ENCODE measurements at regions of chr11 and their contacts with region 1.

Region 1: GRCh38 chr11:47766305-47767227 is 575 bp downstream of the FNBP4 start:
- DNase-seq: peak; percentile 89
- ATAC-seq: peak; percentile 37
- H3K4me3 Mint-ChIP-seq: peak overlapping the region; percentile 98
- H3K27ac Mint-ChIP-seq: peak overlapping the region; percentile 98
- H3K4me1 Mint-ChIP-seq: peaks cover 18% of the 10 kb centered on the region
- H3K27me3 Mint-ChIP-seq: no peaks in the 10 kb centered on the region

Region 2: DNA sequence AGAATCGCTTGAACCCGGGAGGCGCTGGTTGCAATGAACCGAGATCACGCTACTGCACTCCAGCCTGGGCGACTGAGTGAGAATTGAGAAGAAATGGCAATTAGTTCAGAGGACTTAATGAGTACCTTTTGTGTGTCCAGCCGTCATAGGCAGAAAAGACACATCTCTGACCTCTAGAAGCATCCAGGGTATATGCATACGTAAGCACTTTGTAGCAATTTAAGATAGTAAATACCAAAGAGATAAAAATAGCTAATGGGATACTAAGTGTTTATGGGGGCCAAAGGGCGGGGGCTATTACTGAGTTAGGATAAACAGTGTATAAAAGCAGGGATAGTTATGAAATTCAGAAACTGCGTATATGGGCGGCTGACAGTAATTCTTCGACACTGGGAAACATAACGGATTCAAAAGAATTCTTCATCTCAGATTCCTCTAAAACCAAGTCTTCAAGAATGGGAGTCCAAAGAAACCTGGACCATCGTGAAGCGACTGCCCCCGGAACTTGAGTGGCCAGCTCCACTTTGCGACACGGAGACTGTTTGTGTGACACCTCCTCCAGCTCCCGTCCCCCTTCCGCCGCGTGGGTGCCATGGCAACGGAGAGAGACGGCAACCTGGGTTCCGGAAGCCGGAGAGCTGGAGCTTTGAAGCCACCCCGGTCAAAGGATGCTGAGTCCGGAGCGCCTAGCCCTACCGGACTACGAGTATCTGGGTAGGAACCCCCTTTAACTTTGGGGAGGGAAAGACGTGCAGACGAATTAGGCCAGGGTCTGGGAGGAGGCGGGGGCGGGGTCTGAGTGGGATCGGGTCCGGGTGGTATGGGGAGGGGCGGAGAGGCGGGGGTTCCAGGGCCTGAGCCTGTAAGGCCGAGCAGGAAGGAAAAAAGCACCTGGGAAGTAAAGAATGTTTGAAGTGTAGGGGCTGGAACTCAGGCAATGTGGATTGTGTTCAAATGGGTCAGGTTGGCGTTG is 830.1 kb before region 1 on chr11 and contains the start of gene CSTPP1:
- CTCF ChIA-PET with region 1: no interaction called
- POLR2A ChIA-PET with region 1: no interaction called
- intact Hi-C with region 1: loop called in 1 of 2 experiments (anchors 5 kb)
- DNase-seq: peak; percentile 97
- ATAC-seq: peak; percentile 96
- H3K4me3 Mint-ChIP-seq: peak within 1 kb of the TSS; percentile 86
- H3K27ac Mint-ChIP-seq: peak within 1 kb of the TSS; percentile 88
- H3K4me1 Mint-ChIP-seq: peaks cover 16% of the 10 kb centered on the region
- H3K27me3 Mint-ChIP-seq: peaks cover 5% of the 10 kb centered on the region
- total RNA-seq, gene CSTPP1: 17.9 to 18.6 TPM

Region 3: DNA sequence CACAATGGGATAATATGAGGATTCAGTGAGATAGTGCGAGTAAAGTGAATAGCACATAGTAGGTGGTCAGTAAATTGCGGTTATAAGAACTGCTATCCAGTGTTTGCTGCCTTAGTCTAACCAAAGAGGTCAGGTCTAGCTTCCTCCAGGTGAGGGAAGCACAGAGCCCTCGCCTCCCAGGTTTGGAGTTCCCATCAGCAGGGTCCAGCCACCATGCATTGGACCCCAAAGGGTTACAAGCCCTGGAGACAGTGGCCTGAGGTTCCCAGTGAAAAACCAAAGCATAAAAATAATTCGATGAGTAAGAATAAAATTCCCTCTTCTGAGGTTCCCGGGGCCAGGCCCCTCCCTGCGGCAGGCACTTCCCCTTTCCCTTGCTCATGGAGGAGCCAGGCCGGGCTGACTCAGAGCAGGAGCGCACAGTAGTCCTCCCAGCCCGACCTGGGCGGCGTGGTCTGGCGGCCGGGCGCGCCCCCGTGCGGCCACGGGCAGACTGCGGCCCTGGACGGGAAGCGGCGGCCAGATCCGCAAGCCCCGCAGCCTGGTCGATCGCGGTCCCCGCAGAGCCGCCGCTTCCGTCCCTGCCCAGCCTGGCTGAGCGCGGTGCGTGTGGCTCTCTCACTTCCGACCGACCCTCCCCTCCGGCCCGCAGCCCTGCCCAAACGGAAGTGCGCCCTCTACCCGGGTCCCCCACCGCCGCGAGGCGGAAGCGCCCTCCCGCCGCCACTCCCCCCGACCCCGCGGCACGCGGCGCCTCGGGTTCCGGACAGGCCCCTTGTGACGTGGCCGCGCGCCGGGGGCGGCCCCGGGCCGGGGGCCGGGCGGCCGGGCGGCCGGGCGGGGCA is 358.6 kb before region 1 on chr11 and contains the start of gene SLC39A13:
- CTCF ChIA-PET with region 1: no interaction called
- POLR2A ChIA-PET with region 1: no interaction called
- intact Hi-C with region 1: loop called in 1 of 2 experiments (anchors 1 kb)
- DNase-seq: peak; percentile 95
- ATAC-seq: peak; percentile 91
- H3K4me3 Mint-ChIP-seq: peak within 1 kb of the TSS; percentile 89
- H3K27ac Mint-ChIP-seq: peak within 1 kb of the TSS; percentile 94
- H3K4me1 Mint-ChIP-seq: peaks cover 16% of the 10 kb centered on the region
- H3K27me3 Mint-ChIP-seq: no peaks in the 10 kb centered on the region
- total RNA-seq, gene SLC39A13: 8.6 to 10.7 TPM

Region 4: GRCh38 chr11:47578524-47579460 is 187.8 kb before region 1 on chr11 and contains the starts of genes KBTBD4 and NDUFS3:
- CTCF ChIA-PET with region 1: no interaction called
- POLR2A ChIA-PET with region 1: no interaction called
- intact Hi-C with region 1: loop called (anchors 1 kb)
- DNase-seq: peak; percentile 92
- ATAC-seq: peak; percentile 96
- H3K4me3 Mint-ChIP-seq: peak within 1 kb of the TSS; percentile 87
- H3K27ac Mint-ChIP-seq: peak within 1 kb of the TSS; percentile 93
- H3K4me1 Mint-ChIP-seq: peaks cover 39% of the 10 kb centered on the region
- H3K27me3 Mint-ChIP-seq: no peaks in the 10 kb centered on the region
- total RNA-seq, gene KBTBD4: 11.9 to 18.4 TPM
- total RNA-seq, gene NDUFS3: 96.9 to 108 TPM

Region 5: DNA sequence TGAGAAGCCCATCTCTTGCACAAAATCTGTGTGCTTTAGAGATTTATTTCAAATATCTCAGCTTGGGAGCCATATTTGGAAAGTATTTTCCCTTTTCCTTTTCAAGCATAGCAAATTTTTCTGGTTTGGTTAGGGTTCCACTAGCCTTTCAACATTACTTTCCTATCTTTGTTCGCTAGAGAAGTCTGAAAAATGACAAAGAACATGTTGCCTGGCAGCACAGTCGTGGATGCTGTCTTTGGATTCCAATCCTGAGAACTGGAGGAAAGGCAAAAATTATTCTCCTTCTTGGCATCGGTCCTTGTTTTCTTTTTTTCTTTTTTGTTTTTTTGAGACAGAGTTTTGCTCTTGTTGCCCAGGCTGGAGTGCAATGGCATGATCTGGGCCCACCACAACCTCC is 117.3 kb before region 1 on chr11:
- CTCF ChIA-PET with region 1: no interaction called
- POLR2A ChIA-PET with region 1: no interaction called
- intact Hi-C with region 1: no loop called
- DNase-seq: no peak
- ATAC-seq: no peak
- H3K4me3 Mint-ChIP-seq: no peak overlapping the region
- H3K27ac Mint-ChIP-seq: no peak overlapping the region
- H3K4me1 Mint-ChIP-seq: no peaks in the 10 kb centered on the region
- H3K27me3 Mint-ChIP-seq: no peaks in the 10 kb centered on the region

Region 6: GRCh38 chr11:47788181-47788580 is 21.6 kb after region 1 on chr11:
- CTCF ChIA-PET with region 1: no interaction called
- POLR2A ChIA-PET with region 1: interaction called, 3 read pairs
- intact Hi-C with region 1: loop called in 1 of 2 experiments (anchors 2 kb)
- DNase-seq: no peak
- ATAC-seq: peak; percentile 44
- H3K4me3 Mint-ChIP-seq: no peak overlapping the region
- H3K27ac Mint-ChIP-seq: no peak overlapping the region
- H3K4me1 Mint-ChIP-seq: peaks cover 5% of the 10 kb centered on the region
- H3K27me3 Mint-ChIP-seq: no peaks in the 10 kb centered on the region

Region 7: DNA sequence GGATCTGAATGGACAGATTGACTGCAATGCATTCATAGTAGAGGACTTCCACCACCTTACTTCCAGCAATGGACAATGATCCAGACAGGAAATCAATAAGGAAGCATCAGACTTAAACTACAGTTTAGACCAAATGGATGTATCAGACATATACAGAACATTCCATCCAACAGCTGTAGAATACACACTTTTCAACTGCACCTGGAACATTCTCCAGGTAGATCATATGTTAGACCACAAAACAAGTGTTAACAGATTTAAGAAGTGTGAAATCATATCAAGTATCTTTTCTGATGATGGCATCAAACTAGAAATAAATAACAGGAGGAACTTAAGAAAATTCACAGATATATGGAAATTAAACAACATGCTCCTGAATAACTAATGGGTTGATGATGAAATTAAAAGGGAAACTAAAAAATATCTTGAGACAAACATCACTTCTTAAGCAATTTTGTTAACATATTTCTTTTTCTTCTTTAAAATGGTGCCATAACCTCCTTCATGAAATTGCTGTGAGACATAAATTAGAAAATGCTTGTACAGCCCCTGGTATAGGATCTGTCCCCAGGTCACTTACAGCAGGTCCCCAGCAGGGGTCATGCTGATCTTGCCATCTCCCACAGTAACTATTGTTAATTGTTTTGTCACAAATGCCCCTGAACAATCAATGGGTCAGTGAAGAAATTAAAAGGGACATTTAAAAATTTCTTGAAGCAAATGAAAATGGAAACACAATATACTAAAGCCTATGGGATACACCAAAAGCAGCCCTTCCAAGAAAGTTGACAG is 350.1 kb after region 1 on chr11:
- CTCF ChIA-PET with region 1: no interaction called
- POLR2A ChIA-PET with region 1: no interaction called
- intact Hi-C with region 1: loop called (anchors 2 to 10 kb)
- DNase-seq: peak; percentile 34
- ATAC-seq: peak; percentile 49
- H3K4me3 Mint-ChIP-seq: no peak overlapping the region
- H3K27ac Mint-ChIP-seq: no peak overlapping the region
- H3K4me1 Mint-ChIP-seq: no peaks in the 10 kb centered on the region
- H3K27me3 Mint-ChIP-seq: no peaks in the 10 kb centered on the region